Sciatic nerve (tissue), 2 donors: ENCODE measurements at regions of chr2 and their contacts with region 1.

Region 1: GRCh38 chr2:21599417-21599816 is 475.6 kb downstream of the TDRD15 start:
- DNase-seq: no peak
- ATAC-seq: no peak

Region 2: DNA sequence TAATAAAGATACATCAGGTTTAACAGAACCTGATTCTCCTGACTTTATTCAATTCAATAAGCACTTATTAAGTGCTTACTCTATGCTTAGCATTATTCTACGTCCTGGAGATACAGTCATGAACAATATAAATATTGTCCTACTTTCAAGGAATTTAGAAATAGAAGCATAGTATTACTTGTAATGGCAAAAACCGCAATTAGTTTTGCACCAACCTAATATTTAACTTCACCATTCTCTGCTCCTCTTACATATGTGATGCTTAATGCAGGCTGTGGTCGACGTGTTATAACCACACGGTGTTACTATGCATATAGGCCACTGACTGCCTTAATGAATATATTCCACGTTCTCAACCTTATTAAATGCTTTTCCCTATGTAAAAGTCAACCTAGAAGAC is 12.1 kb before region 1 on chr2:
- intact Hi-C with region 1: loop called (anchors 1 kb)
- DNase-seq: no peak
- ATAC-seq: no peak